ENCODE measurements at regions of chr6 and their contacts with region 1.

Region 1: DNA sequence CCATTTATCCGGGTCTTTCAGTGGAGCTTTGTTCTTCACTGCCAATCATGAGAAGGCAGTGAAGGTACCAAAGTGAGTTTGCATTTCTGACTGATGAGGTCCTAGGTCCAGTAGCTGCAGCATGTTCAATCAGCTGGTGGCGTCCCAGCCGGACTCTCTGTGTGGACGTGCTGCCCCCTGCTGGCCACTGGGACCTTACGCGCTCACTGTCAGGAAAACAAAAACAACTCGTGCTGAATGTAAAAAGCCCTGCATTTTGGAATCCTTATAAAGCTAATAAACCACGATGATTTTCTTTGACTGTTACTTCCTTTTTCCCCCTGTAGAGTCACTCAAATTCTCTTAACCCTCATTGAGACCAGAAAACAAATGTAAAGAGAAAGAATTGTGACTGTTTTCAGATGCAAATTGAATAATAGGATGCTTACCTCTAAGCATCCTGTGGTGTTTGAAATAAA is 4.9 kb upstream of the CD24 start:
- DNase-seq: peak; percentile 87
- H3K4me3 ChIP-seq: no peak overlapping the region
- H3K27ac ChIP-seq: no peak overlapping the region
- H3K4me1 ChIP-seq: peaks cover 0 to 11% (median 9%) of the 10 kb centered on the region in 4 donors
- H3K27me3 ChIP-seq: peaks cover 2 to 55% (median 10%) of the 10 kb centered on the region in 3 donors
- CTCF ChIP-seq: peak; percentile 58 to 90 (median 72)
- EP300 ChIP-seq: no peak
- POLR2A ChIP-seq: no peak

Region 2: GRCh38 chr6:106456756-106457155 is 522.7 kb before region 1 on chr6:
- intact Hi-C with region 1: loop called (anchors 5 kb)
- DNase-seq: no peak
- H3K4me3 ChIP-seq: no peak overlapping the region
- H3K27ac ChIP-seq: no peak overlapping the region
- H3K4me1 ChIP-seq: no peaks in the 10 kb centered on the region
- H3K27me3 ChIP-seq: no peaks in the 10 kb centered on the region
- CTCF ChIP-seq: no peak
- EP300 ChIP-seq: no peak
- POLR2A ChIP-seq: no peak